Panc1 (cell line): ENCODE measurements at regions of chr3 and their contacts with region 1.

Region 1: DNA sequence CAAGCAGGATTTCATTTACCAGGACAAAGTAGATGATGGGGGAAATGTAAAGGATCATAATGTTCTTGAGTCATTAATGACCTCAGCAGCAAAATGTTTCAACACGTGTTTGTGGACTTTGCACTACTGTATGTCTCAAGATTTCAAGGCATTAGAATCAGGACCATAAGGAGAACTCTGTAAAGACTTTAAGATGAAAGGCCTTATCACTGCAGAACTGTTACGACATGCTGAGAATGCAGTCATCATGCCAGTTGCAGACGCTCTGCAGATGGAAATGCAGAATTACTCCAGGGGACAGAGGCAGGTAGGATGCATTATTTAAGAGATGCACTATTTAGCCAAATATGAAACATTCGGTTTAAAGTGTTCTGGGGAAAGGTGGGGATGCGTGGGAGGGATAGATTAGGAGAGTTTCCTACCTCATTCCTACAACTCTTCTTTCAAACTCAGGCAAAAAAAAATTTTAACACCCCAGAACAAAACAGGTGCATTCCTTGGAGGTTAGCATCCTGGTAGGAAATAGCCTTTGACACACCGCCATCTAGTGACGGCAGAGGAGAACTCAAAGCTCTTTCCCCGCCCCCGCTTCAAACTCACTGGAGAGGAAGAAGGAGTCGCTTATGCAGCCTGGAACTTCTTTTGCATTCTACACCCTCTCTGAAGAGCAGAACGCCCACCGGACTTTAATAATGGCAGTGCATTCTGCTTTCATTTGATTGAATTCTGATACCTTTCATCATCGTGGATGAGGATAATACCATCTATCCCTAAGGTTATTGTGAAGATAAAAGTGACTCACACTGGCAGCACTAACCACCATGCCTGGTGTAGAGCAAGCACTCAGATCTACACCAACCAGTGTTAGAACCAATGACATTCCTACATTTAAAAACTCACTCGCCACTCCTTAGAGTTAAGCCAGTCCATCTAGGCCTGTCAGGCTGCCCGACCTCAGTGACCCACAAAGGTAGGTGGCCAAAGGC is 43.1 kb upstream of the TOPAZ1 start:
- DNase-seq: peak; percentile 39
- ATAC-seq: peak; percentile 87
- H3K4me3 ChIP-seq: no peak overlapping the region
- H3K27ac ChIP-seq: no peak overlapping the region
- H3K4me1 ChIP-seq: no peaks in the 10 kb centered on the region
- H3K27me3 ChIP-seq: peaks cover 5% of the 10 kb centered on the region; the same call in 1 of the 2 replicates
- CTCF ChIP-seq: peak; percentile 79

Region 2: GRCh38 chr3:43540624-43541023 is 658.0 kb before region 1 on chr3:
- CTCF ChIA-PET with region 1: no interaction called
- POLR2A ChIA-PET with region 1: no interaction called
- in situ Hi-C with region 1: no loop called
- intact Hi-C with region 1: loop called (anchors 5 kb)
- DNase-seq: no peak
- ATAC-seq: no peak
- H3K4me3 ChIP-seq: no peak overlapping the region
- H3K27ac ChIP-seq: no peak overlapping the region
- H3K4me1 ChIP-seq: no peaks in the 10 kb centered on the region
- H3K27me3 ChIP-seq: no peaks in the 10 kb centered on the region
- CTCF ChIP-seq: no peak

Region 3: DNA sequence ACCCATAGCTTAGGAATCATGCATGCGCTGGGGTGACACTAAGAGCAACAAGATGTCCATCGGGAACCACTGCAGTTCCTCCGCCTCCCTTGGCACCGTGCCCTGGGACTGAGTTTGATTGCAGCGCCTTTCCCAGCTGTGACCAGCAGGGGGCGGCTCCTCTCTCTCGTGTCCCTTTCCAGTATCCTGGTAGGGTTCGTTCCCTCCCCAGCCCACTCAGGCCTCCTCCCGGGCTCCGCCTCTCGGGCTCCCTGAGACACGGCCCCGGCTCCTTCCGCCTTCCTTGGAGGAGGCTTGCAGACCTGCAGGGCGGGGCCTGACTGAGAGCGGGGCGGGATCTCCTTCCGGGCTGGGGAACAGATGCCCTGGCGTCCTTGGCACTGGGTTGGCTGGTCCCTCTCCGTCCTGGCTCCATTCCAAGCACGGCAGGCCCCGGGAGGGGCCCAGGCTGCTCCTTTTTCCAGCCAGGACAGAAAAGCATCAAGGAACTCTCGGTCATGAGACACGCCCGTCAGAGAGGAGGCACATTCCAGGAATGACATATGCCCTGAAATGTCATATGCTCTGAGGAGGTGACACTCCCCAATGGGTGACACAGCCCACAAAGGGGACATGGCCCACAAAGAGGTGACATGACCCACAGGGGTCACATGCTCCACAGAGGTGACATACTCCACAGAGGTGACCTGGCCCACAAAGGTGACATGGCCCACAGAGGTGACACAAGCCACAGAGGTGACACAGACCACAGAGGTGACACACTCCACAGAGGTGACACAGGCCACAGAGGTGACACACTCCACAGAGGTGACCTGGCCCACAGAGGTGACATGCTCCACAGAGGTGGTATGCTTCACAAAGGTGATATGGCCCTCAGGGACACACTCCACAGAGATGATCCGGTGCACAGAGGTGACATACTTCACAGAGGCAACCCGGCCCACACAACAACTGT is 428.8 kb before region 1 on chr3:
- CTCF ChIA-PET with region 1: no interaction called
- POLR2A ChIA-PET with region 1: no interaction called
- in situ Hi-C with region 1: no loop called
- intact Hi-C with region 1: loop called (anchors 5 kb)
- DNase-seq: no peak
- ATAC-seq: peak; percentile 98
- H3K4me3 ChIP-seq: peak overlapping the region; percentile 21 to 34; a peak in 3 of 4 replicates
- H3K27ac ChIP-seq: no peak overlapping the region
- H3K4me1 ChIP-seq: no peaks in the 10 kb centered on the region; the same call in 1 of the 2 replicates
- H3K27me3 ChIP-seq: no peaks in the 10 kb centered on the region
- CTCF ChIP-seq: peak; percentile 87

Region 4: DNA sequence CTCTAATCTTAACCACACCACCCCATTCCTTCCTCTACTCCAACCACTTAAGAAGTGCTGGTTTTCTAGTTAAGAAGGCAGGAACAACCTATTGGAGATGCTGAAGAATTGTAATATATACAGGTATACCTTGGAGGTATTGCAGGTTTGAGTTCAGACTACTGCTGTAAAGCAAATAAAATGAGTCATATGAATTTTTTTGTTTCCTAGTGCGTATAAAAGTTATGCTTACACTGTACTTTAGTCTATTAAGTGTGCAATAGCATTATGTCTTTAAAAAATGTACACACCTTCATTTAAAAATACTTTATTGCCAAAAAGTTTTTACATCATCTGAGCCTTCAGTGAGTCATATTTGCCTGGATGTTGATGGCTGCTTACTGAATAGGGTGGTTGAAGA is 65.6 kb after region 1 on chr3:
- CTCF ChIA-PET with region 1: no interaction called
- POLR2A ChIA-PET with region 1: no interaction called
- in situ Hi-C with region 1: no loop called
- intact Hi-C with region 1: no loop called
- DNase-seq: no peak
- ATAC-seq: no peak
- H3K4me3 ChIP-seq: no peak overlapping the region
- H3K27ac ChIP-seq: no peak overlapping the region
- H3K4me1 ChIP-seq: no peaks in the 10 kb centered on the region
- H3K27me3 ChIP-seq: no peaks in the 10 kb centered on the region
- CTCF ChIP-seq: no peak